ENCODE measurements at regions of chr9 and their contacts with region 1.

Region 1: GRCh38 chr9:97468658-97469448 is 32.6 kb upstream of the TMOD1 start:
- DNase-seq: peak in 6 of 9 experiments; percentile 12 to 50 (median 32)
- ATAC-seq: no peak
- H3K4me3 ChIP-seq: no peak overlapping the region
- H3K4me3 Mint-ChIP-seq: no peak overlapping the region
- H3K27ac ChIP-seq: no peak overlapping the region
- H3K27ac Mint-ChIP-seq: peak overlapping the region; percentile 20
- H3K4me1 ChIP-seq: no peaks in the 10 kb centered on the region
- H3K4me1 Mint-ChIP-seq: no peaks in the 10 kb centered on the region
- H3K27me3 ChIP-seq: no peaks in the 10 kb centered on the region
- H3K27me3 Mint-ChIP-seq: no peaks in the 10 kb centered on the region
- CTCF ChIP-seq: peak; percentile 11

Region 2: GRCh38 chr9:97237951-97238851 is 230.7 kb before region 1 on chr9:
- CTCF ChIA-PET with region 1: no interaction called
- POLR2A ChIA-PET with region 1: no interaction called
- intact Hi-C with region 1: no loop called
- DNase-seq: peak; percentile 48 to 89 (median 77)
- ATAC-seq: peak; percentile 91
- H3K4me3 ChIP-seq: peak overlapping the region; percentile 59 to 89
- H3K4me3 Mint-ChIP-seq: peak overlapping the region; percentile 93
- H3K27ac ChIP-seq: peak overlapping the region; percentile 45 to 51
- H3K27ac Mint-ChIP-seq: peak overlapping the region; percentile 95
- H3K4me1 ChIP-seq: peaks cover 14% of the 10 kb centered on the region
- H3K4me1 Mint-ChIP-seq: peaks cover 32% of the 10 kb centered on the region
- H3K27me3 ChIP-seq: no peaks in the 10 kb centered on the region
- H3K27me3 Mint-ChIP-seq: no peaks in the 10 kb centered on the region
- CTCF ChIP-seq: no peak

Region 3: DNA sequence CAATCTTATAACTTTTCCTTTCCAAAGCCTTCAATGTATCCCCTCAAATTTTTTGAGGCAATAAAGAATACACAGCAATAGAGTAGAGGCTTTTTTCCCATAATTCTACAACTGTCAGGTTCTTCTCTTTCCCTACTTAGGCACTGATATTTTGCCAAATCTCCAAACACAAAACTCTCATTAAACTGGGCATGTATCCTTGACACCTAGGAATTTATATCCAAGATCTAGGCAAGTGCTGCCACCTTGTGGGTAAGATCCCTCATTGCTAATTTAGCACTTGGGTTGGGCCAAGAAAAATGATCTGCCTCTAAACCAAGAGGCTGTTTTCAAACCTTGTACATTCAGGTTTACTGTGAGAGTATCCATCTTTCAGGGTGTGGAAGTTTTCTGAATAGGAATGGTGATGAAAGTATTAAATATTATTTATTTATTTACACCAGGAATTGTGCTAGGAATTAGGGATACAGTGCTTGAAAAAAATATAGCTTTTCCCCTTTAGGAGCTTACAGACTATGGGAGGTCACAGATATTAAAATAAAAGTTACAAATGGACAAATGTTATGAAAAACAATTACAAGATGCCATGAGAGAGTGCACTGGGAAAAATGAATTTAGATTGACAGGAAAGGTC is 146.7 kb after region 1 on chr9:
- CTCF ChIA-PET with region 1: interaction called, 22 read pairs
- POLR2A ChIA-PET with region 1: no interaction called
- intact Hi-C with region 1: loop called (anchors 1 kb)
- DNase-seq: peak in 8 of 9 experiments; percentile 22 to 74 (median 58)
- ATAC-seq: peak; percentile 67
- H3K4me3 ChIP-seq: no peak overlapping the region
- H3K4me3 Mint-ChIP-seq: no peak overlapping the region
- H3K27ac ChIP-seq: no peak overlapping the region
- H3K27ac Mint-ChIP-seq: no peak overlapping the region
- H3K4me1 ChIP-seq: no peaks in the 10 kb centered on the region
- H3K4me1 Mint-ChIP-seq: peaks cover 2% of the 10 kb centered on the region
- H3K27me3 ChIP-seq: no peaks in the 10 kb centered on the region
- H3K27me3 Mint-ChIP-seq: no peaks in the 10 kb centered on the region
- CTCF ChIP-seq: peak; percentile 97

Measured in CD8-positive, alpha-beta T cell (primary cell).